Right ventricle myocardium inferior (tissue), 1 donor: ENCODE measurements at regions of chr16 and their contacts with region 1.

Region 1: GRCh38 chr16:2883027-2883851 is at the start of gene FLYWCH2:
- DNase-seq: peak; percentile 99
- ATAC-seq: peak; percentile 89
- total RNA-seq, gene FLYWCH2: 31.3 TPM

Region 2: GRCh38 chr16:2904100-2904921 is 21.1 kb after region 1 on chr16:
- intact Hi-C with region 1: loop called (anchors 1 kb)
- DNase-seq: peak; percentile 94
- ATAC-seq: peak; percentile 72

Region 3: DNA sequence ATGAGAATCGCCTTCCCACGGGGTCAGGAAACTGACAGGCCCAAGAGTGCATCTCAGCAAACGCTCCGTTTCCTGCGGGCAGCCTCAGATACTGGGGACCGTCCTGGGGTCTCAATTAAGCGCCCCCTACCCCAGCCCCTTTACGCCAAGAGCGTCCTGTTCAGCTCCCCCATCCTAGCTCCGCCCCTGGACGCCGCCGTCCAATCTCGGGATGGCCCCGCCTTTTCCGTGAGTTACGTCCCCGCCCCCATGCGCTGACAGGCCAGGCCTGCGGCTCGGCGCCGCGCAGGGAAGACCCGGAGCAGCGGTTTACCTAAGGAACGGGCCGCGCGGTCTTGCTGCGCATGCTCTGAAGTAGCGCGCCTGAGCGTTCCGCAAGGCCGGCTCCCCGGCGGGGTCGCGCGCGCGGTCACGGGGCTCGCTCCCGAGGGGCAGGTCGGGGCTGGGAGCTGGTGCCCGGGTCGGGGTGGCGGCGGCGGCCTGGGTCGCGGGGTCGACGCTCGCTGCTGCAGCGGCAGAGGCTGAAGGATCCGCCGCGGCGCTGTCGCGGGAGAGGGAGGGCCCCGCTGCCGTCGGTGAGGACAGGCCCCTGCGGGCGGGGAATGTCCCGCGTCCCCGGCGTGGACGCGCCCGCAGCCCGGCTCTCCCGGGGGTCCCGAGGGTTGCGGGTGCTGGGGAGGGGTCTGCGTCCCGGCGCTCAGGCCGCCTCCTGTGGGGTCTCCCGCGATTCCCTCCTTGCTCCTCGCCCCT is 28.5 kb after region 1 on chr16 and contains the start of gene FLYWCH1:
- intact Hi-C with region 1: loop called (anchors 2 kb)
- DNase-seq: peak; percentile 100
- ATAC-seq: peak; percentile 98
- total RNA-seq, gene FLYWCH1: 34.5 TPM

Region 4: DNA sequence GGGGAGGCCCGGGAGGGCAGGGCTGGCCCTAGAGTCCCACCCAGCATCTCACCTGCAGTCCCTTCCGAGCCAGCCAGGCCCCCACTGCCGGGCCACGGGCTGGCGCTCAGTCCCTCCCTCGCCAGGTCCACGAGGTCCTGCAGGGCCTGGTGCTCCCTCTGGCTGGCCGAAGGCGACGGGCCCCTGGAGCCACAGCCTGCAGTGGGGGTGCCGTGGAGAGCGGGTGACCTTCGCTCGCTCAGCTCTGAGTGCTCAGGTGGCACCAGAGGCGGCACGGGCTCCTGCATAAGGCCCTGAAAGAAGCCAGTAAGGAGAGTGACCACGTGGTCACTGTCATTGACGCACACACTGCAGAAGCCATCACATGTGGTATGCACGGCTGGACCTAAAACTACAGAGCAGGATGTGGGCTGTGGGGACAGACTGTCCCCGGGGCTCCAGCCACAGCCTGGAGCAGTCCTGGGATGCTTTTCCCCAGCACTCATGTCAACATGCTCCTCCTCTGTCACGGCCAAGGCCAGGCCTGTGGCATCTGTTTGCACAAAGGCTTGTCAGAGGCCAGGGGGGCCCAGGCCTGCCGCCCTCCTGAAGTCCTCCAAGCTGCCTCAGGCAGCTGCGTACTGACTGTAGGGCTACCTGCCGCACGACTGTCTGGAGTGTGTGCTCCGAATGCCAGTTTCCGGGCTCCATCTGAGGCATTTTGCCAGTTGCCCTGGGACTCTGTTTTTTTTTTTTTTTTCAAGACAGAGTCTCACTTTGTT is 713.0 kb after region 1 on chr16:
- intact Hi-C with region 1: no loop called
- DNase-seq: no peak
- ATAC-seq: peak; percentile 45